Transverse colon (tissue), 4 donors: ENCODE measurements at regions of chr15 and their contacts with region 1.

Region 1: DNA sequence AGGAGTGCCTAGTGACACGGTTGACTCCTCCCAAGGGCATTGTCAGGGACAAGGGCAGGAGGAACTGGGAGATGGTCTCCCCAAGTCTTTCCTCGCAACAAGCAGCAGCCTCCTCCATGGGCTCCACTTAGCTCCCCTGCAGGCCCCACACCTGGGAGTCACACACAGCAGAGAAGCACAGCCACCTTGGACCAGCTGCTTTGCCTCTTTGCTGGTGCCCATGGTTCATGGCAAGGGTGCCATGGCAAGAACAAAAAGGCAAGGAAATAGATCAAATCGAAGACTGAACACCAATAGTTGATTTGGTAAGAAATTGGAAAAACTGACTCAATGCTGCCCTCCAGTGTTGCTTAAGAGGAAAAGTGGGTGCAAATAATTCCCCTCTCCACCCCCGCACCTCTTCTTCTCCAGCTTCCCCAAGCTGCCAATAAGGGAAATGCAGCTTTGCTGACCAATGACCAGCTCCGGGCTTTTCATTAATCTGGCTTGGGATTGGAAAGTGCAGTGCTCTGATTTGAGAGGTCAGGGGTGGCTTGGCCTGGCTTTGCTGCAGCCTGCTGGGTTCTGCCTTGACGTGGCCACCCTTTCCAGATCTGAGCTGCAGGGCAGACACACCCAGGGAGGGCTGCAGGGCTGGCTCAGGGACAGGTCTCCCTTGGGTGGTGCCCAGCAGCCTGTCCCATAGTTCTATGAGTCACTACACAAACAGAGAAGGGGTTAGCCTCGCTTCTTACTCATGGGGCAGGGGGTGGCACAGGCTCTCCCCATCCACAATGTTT is 162.0 kb downstream of the KLF13 start:
- DNase-seq: peak; percentile 75
- H3K4me3 ChIP-seq: no peak overlapping the region
- H3K27ac ChIP-seq: peak overlapping the region; percentile 40 to 67 (median 64)
- H3K4me1 ChIP-seq: peaks cover 12 to 29% (median 22%) of the 10 kb centered on the region in 4 donors
- H3K27me3 ChIP-seq: peaks cover 5% of the 10 kb centered on the region
- CTCF ChIP-seq: peak; percentile 87 to 99 (median 93)
- EP300 ChIP-seq: no peak
- POLR2A ChIP-seq: no peak

Region 2: DNA sequence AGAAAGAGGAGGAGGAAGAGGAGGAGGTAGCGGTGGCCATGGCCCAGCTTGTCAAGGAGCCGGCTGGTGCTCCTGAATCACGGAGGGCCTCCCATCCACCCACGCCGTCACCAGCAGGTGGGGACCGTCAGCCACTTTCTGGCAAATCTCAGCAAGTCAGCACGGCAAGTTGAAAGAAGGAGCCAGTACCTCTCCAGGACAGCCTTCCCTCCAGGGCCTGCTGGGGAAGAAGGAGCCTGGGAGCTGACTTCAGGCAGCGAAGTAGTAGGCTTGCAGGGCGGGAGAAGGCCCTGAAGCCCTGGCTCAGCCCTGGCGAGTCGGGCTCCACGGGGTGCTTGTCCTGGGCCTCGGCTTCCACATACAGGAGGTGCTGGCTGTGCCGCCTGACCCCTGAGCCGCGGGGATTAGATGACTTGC is 287.9 kb before region 1 on chr15:
- in situ Hi-C with region 1: loop called in 3 of 4 experiments (anchors 5 to 10 kb)
- intact Hi-C with region 1: no loop called
- DNase-seq: peak; percentile 72
- H3K4me3 ChIP-seq: no peak overlapping the region
- H3K27ac ChIP-seq: no peak overlapping the region
- H3K4me1 ChIP-seq: peaks cover 0 to 7% (median 0%) of the 10 kb centered on the region in 4 donors
- H3K27me3 ChIP-seq: no peaks in the 10 kb centered on the region
- CTCF ChIP-seq: peak; percentile 28 to 70 (median 48)
- EP300 ChIP-seq: no peak
- POLR2A ChIP-seq: no peak

Region 3: DNA sequence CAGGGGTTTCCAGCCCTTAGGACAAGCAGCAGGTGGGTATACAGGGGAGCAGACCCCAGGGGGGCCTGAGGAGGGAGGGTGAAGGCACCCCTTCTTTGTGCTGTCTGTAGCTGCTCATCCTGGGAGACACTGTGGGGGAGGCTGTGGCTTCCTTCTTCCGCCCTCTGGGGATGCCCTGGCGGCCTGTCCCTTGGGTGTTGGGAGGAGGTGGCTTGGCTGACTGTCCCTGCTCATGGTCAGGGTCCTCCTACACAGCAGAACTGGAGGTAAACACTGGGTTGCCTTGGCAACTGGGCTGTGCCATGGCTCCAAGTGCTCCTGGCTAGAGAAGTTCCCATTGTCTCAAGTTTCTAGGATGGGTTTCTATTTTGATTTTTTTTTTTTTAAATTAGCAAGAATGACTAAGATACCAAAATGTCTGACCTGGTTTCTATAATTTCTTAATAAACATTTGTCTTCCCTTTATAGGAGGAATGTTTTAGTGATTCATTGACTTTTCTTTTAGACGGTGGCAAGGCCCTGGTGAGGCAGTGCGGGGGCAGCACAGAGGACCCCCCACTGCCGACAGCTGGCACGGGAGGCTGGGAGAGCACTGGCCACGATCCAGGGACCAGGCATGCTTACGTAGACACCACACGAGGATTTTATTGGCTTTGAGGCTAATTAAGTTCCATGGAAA is 149.6 kb before region 1 on chr15:
- in situ Hi-C with region 1: loop called in 1 of 4 experiments (anchors 10 kb)
- intact Hi-C with region 1: no loop called
- DNase-seq: no peak
- H3K4me3 ChIP-seq: no peak overlapping the region
- H3K27ac ChIP-seq: peak overlapping the region; percentile 72 to 76 (median 74)
- H3K4me1 ChIP-seq: peaks cover 58 to 100% (median 79%) of the 10 kb centered on the region in 4 donors
- H3K27me3 ChIP-seq: no peaks in the 10 kb centered on the region
- CTCF ChIP-seq: no peak
- EP300 ChIP-seq: no peak
- POLR2A ChIP-seq: no peak

Region 4: DNA sequence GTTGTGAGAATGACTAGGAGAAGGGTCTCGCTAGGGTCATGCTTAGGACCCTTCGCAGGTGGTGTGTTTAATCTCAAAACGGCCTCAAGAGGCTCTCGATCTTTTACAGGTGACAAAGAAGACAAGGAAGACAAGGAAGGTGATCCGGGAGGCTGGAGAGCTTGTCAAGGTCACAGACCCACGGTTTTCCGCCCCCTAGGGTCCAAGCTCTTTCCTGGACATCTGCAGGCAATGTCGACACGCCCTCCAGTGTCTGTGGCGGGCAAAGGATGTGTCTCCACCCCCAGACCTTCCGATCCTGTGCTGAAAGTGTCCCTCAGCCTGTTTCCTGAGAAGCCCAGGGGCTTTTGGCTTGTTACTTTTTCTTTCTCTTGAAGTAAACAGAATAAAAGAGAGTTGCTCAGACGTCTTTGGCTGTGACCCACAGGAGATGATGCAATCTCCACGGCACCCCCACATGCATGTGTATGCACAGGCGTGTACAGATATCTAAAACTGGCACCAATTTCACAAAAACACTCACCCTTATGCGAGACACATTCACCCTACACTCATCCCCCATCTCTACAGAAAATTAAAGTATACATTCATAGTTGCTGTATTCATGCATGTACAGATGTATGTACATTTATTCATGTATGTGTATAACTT is 53.2 kb before region 1 on chr15:
- in situ Hi-C with region 1: loop called in 1 of 4 experiments (anchors 10 kb)
- intact Hi-C with region 1: no loop called
- DNase-seq: peak; percentile 88
- H3K4me3 ChIP-seq: peak overlapping the region in 2 of 4 donors; percentile 2 to 16
- H3K27ac ChIP-seq: peak overlapping the region; percentile 75 to 79 (median 78)
- H3K4me1 ChIP-seq: peaks cover 16 to 32% (median 20%) of the 10 kb centered on the region in 4 donors
- H3K27me3 ChIP-seq: no peaks in the 10 kb centered on the region
- CTCF ChIP-seq: peak; percentile 60 to 81 (median 66)
- EP300 ChIP-seq: no peak
- POLR2A ChIP-seq: no peak